PC-3 (cell line): ENCODE measurements at regions of chr1 and their contacts with region 1.

Region 1: DNA sequence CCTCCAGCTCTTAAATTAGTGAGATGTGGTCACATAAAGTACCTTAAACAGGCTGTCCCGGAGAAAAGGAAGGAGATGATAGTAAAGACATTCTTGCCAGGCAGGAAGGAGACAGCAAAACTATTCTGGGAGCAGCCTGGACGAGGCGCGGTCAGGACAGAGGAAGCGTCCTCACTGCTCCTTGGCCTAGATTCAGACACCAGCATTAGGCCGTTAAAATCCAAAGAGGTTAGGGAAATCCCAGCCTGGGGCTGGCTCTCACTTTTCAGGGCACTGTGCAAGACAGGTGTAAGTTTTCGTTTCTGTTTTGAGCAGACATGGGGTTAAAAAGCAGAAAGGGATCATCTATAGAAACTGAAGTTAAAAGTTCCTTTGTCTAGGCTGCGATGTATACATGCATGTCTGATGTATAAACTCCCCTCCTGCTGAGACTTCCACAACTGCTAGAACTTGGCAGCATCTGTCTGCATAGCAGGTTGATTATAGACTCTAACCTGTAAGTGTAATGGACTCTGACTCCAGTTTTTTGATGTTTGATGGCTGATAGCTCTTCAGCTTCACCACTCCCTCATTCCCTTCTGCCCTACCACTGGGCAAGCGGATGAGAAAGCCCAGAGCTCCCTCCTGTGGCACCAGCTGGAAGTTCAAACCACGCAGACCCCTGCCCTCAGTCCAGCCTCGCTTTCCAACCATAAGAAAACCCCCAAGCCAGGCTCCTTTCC is 21.5 kb downstream of the STPG1 start:
- DNase-seq: peak; percentile 79
- ATAC-seq: peak; percentile 80
- H3K4me3 ChIP-seq: peak overlapping the region; percentile 60
- H3K27ac ChIP-seq: peak overlapping the region; percentile 75
- H3K4me1 ChIP-seq: peaks cover 37% of the 10 kb centered on the region
- H3K27me3 ChIP-seq: no peaks in the 10 kb centered on the region
- CTCF ChIP-seq: peak; percentile 92

Region 2: GRCh38 chr1:24150234-24151174 is 241.5 kb before region 1 on chr1:
- CTCF ChIA-PET with region 1: interaction called, 25 read pairs
- POLR2A ChIA-PET with region 1: no interaction called
- intact Hi-C with region 1: loop called (anchors 1 kb)
- DNase-seq: peak; percentile 95
- ATAC-seq: peak; percentile 92
- H3K4me3 ChIP-seq: peak overlapping the region; percentile 68
- H3K27ac ChIP-seq: peak overlapping the region; percentile 77
- H3K4me1 ChIP-seq: peaks cover 23% of the 10 kb centered on the region
- H3K27me3 ChIP-seq: no peaks in the 10 kb centered on the region
- CTCF ChIP-seq: peak; percentile 79

Region 3: GRCh38 chr1:24235921-24236781 is 155.9 kb before region 1 on chr1:
- CTCF ChIA-PET with region 1: no interaction called
- POLR2A ChIA-PET with region 1: no interaction called
- intact Hi-C with region 1: loop called (anchors 1 kb)
- DNase-seq: peak; percentile 58
- ATAC-seq: peak; percentile 69
- H3K4me3 ChIP-seq: no peak overlapping the region
- H3K27ac ChIP-seq: peak overlapping the region; percentile 55
- H3K4me1 ChIP-seq: peaks cover 19% of the 10 kb centered on the region
- H3K27me3 ChIP-seq: no peaks in the 10 kb centered on the region
- CTCF ChIP-seq: no peak

Region 4: DNA sequence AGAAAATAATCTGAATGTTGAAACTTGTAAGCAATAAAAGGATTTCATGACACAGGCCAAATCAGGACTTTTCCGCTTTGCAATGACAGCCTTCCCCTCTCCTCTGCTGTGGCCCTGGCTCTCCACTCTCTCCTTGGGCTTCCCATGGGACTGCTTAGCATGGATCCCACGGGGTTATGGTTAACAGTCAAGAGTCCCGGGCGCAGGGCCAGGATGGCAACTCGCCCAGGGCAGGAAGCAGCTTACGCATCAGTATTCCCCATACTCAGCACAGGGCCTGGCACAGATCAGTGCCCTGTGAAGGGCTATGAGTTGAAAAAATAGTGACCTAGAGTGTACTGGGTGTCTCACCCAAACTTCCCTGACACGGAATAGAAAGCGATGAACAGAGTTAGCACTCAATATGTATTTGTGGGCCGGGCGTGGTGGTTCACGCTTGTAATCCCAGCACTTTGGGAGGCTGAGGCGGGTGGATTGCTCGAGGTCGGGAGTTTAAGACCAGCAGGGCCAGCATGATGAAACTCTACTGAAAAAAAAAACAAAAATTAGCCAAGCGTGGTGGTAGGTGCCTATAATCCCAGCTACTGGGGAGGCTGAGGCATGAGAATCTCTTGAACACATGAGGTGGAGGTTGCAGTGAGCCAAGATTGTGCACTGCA is 102.0 kb before region 1 on chr1:
- CTCF ChIA-PET with region 1: interaction called, 3 read pairs
- POLR2A ChIA-PET with region 1: no interaction called
- intact Hi-C with region 1: loop called (anchors 5 kb)
- DNase-seq: peak; percentile 95
- ATAC-seq: peak; percentile 57
- H3K4me3 ChIP-seq: no peak overlapping the region
- H3K27ac ChIP-seq: peak overlapping the region; percentile 76
- H3K4me1 ChIP-seq: peaks cover 62% of the 10 kb centered on the region
- H3K27me3 ChIP-seq: no peaks in the 10 kb centered on the region
- CTCF ChIP-seq: no peak

Region 5: GRCh38 chr1:24374891-24375786 is 16.9 kb before region 1 on chr1:
- CTCF ChIA-PET with region 1: interaction called, 3 read pairs
- POLR2A ChIA-PET with region 1: no interaction called
- intact Hi-C with region 1: loop called (anchors 2 kb)
- DNase-seq: peak; percentile 92
- ATAC-seq: peak; percentile 90
- H3K4me3 ChIP-seq: peak overlapping the region; percentile 46
- H3K27ac ChIP-seq: peak overlapping the region; percentile 96
- H3K4me1 ChIP-seq: peaks cover 38% of the 10 kb centered on the region
- H3K27me3 ChIP-seq: no peaks in the 10 kb centered on the region
- CTCF ChIP-seq: no peak

Region 6: DNA sequence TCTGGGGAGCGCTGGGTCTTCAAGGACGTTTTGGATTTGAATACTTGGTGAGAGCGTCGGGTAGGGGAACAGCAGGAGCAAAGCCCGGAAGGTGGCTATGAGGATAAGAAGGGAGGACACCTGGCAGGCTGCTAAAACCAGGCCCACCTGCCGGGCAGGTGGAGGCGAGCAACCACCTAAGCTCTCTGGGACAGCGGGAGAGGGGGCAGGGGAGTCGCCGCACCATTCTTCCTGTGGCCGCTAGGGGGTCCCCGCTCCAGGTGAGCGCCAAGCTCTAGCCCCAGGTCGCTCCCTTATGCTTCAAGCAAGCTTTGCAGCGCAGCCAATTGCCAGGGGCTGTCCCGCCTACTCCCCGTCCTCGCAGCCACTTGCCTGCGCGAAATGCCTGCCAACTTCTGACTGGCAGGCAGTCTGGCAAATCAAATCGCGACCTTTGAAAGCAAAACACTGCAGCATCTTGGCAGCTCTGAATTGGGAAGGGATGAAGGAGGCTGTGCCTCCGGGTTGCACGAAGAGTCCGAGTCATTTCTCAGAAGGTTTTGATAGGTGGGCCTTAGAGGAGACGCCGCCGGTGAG is 23.4 kb after region 1 on chr1 and contains the start of gene NIPAL3:
- CTCF ChIA-PET with region 1: interaction called, 8 read pairs
- POLR2A ChIA-PET with region 1: interaction called, 5 read pairs
- intact Hi-C with region 1: loop called (anchors 2 kb)
- DNase-seq: peak; percentile 99
- ATAC-seq: peak; percentile 61
- H3K4me3 ChIP-seq: peak within 1 kb of the TSS; percentile 89
- H3K27ac ChIP-seq: peak within 1 kb of the TSS; percentile 94
- H3K4me1 ChIP-seq: peaks cover 72% of the 10 kb centered on the region
- H3K27me3 ChIP-seq: no peaks in the 10 kb centered on the region
- CTCF ChIP-seq: peak; percentile 69
- total RNA-seq, gene NIPAL3: 35.2 and 43.7 TPM in 2 replicates

Region 7: GRCh38 chr1:24639094-24639493 is 247.1 kb after region 1 on chr1:
- CTCF ChIA-PET with region 1: no interaction called
- POLR2A ChIA-PET with region 1: no interaction called
- intact Hi-C with region 1: no loop called
- DNase-seq: no peak
- ATAC-seq: no peak
- H3K4me3 ChIP-seq: no peak overlapping the region
- H3K27ac ChIP-seq: peak overlapping the region; percentile 49
- H3K4me1 ChIP-seq: peaks cover 17% of the 10 kb centered on the region
- H3K27me3 ChIP-seq: no peaks in the 10 kb centered on the region
- CTCF ChIP-seq: no peak